ENCODE measurements at regions of chr16 and their contacts with region 1.

Region 1: GRCh38 chr16:58198022-58198683 is at the start of gene CSNK2A2:
- DNase-seq: peak; percentile 79
- H3K4me3 ChIP-seq: peak within 1 kb of the TSS; percentile 67 to 92 (median 84)
- H3K27ac ChIP-seq: peak within 1 kb of the TSS; percentile 45 to 59 (median 57)
- H3K4me1 ChIP-seq: peaks cover 0 to 31% (median 18%) of the 10 kb centered on the region in 4 donors
- H3K27me3 ChIP-seq: no peaks in the 10 kb centered on the region
- CTCF ChIP-seq: peak in 1 of 4 experiments; percentile 24
- EP300 ChIP-seq: no peak
- POLR2A ChIP-seq: no peak
- total RNA-seq, gene CSNK2A2: 29.5 to 79.8 (median 33.0) TPM

Region 2: GRCh38 chr16:58129097-58129936 is 68.8 kb before region 1 on chr16 and contains the start of gene CFAP20:
- intact Hi-C with region 1: loop called (anchors 5 kb)
- DNase-seq: peak; percentile 99
- H3K4me3 ChIP-seq: peak within 1 kb of the TSS; percentile 73 to 92 (median 84)
- H3K27ac ChIP-seq: peak within 1 kb of the TSS; percentile 89 to 95 (median 92)
- H3K4me1 ChIP-seq: peaks cover 0 to 41% (median 39%) of the 10 kb centered on the region in 4 donors
- H3K27me3 ChIP-seq: no peaks in the 10 kb centered on the region
- CTCF ChIP-seq: no peak
- EP300 ChIP-seq: peak in 2 of 4 donors; percentile 52 to 73
- POLR2A ChIP-seq: peak; percentile 86 to 88
- total RNA-seq, gene CFAP20: 11.9 to 42.5 (median 26.6) TPM

Region 3: GRCh38 chr16:58392215-58393137 is 194.3 kb after region 1 on chr16 and contains the start of gene GINS3:
- intact Hi-C with region 1: loop called (anchors 5 kb)
- DNase-seq: peak; percentile 92
- H3K4me3 ChIP-seq: peak within 1 kb of the TSS; percentile 72 to 96 (median 82)
- H3K27ac ChIP-seq: peak within 1 kb of the TSS; percentile 81 to 87 (median 84)
- H3K4me1 ChIP-seq: peaks cover 0 to 7% (median 2%) of the 10 kb centered on the region in 4 donors
- H3K27me3 ChIP-seq: no peaks in the 10 kb centered on the region
- CTCF ChIP-seq: no peak
- EP300 ChIP-seq: no peak
- POLR2A ChIP-seq: no peak
- total RNA-seq, gene GINS3: 1.1 to 2.5 (median 2.4) TPM

Measured in sigmoid colon (tissue), 7 donors.